ENCODE measurements at regions of chr3 and their contacts with region 1.

Region 1: GRCh38 chr3:141465221-141465620 is 21.6 kb upstream of the RASA2 start:
- DNase-seq: no peak
- H3K4me3 ChIP-seq: no peak overlapping the region
- H3K27ac ChIP-seq: no peak overlapping the region
- H3K27me3 ChIP-seq: no peaks in the 10 kb centered on the region
- CTCF ChIP-seq: peak; percentile 45

Region 2: GRCh38 chr3:141303481-141304223 is 161.6 kb before region 1 on chr3:
- CTCF ChIA-PET with region 1: interaction called, 328 read pairs
- POLR2A ChIA-PET with region 1: no interaction called
- DNase-seq: peak; percentile 73
- H3K4me3 ChIP-seq: no peak overlapping the region
- H3K27ac ChIP-seq: no peak overlapping the region
- H3K27me3 ChIP-seq: no peaks in the 10 kb centered on the region
- CTCF ChIP-seq: peak; percentile 72

Region 3: DNA sequence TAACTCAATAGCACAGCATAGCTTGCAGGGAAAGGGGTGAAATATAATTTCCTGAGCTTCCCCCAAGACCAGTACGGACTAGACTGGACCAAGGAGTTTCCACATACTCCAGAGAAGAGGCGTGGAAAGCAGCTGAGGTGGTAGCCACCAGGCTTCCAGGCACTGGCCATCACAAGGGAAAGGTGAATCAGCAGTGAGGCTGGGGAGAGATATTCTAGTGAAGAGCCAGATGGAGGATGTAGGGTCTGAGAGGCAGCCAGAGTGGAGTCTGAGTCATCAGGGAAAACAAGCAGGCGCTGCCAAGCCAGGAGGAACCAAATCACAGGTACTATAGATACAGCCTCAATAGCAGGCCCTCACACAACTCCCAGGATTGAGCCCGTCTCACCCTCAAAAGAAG is 12.0 kb after region 1 on chr3:
- CTCF ChIA-PET with region 1: interaction called, 11 read pairs
- POLR2A ChIA-PET with region 1: no interaction called
- DNase-seq: peak; percentile 52
- H3K4me3 ChIP-seq: no peak overlapping the region
- H3K27ac ChIP-seq: peak overlapping the region; percentile 55
- H3K27me3 ChIP-seq: no peaks in the 10 kb centered on the region
- CTCF ChIP-seq: no peak

Region 4: GRCh38 chr3:141487521-141488252 is 22.5 kb after region 1 on chr3:
- CTCF ChIA-PET with region 1: interaction called, 12 read pairs
- POLR2A ChIA-PET with region 1: interaction called, 8 read pairs
- DNase-seq: no peak
- H3K4me3 ChIP-seq: peak overlapping the region; percentile 76
- H3K27ac ChIP-seq: peak overlapping the region; percentile 53
- H3K27me3 ChIP-seq: no peaks in the 10 kb centered on the region
- CTCF ChIP-seq: no peak

Region 5: GRCh38 chr3:141561426-141562034 is 96.3 kb after region 1 on chr3:
- CTCF ChIA-PET with region 1: interaction called, 172 read pairs
- POLR2A ChIA-PET with region 1: no interaction called
- DNase-seq: peak; percentile 53
- H3K4me3 ChIP-seq: no peak overlapping the region
- H3K27ac ChIP-seq: no peak overlapping the region
- H3K27me3 ChIP-seq: no peaks in the 10 kb centered on the region
- CTCF ChIP-seq: peak; percentile 100